ENCODE measurements at regions of chr3 and their contacts with region 1.

Region 1: DNA sequence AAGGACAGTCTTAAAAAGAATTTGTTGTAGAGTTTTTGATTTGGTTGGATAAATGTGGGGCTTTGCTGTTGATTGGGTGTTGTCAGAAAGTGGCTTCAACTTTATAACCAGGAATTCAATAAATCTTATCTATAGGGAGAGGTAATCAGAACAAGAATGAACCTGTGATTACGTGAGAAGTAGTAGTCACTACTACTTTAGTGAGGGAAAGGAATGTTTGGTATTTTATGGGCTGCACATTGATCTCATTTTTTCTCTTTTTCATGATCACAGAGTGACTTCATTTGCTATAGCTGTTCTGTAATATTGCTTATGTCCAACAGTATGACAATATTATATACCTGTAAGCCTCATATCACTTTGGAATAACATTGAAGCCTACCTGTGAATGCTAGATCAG is 485.2 kb upstream of the BCHE start:
- DNase-seq: peak; percentile 16
- H3K4me3 ChIP-seq: no peak overlapping the region
- H3K27ac ChIP-seq: no peak overlapping the region
- H3K4me1 ChIP-seq: peaks cover 3% of the 10 kb centered on the region
- H3K27me3 ChIP-seq: no peaks in the 10 kb centered on the region
- CTCF ChIP-seq: no peak

Region 2: GRCh38 chr3:166372571-166373106 is 50.2 kb after region 1 on chr3:
- CTCF ChIA-PET with region 1: no interaction called
- dilution Hi-C with region 1: loop called (anchors 5 kb)
- in situ Hi-C with region 1: no loop called
- intact Hi-C with region 1: no loop called
- DNase-seq: no peak
- H3K4me3 ChIP-seq: no peak overlapping the region
- H3K27ac ChIP-seq: no peak overlapping the region
- H3K4me1 ChIP-seq: no peaks in the 10 kb centered on the region
- H3K27me3 ChIP-seq: peaks cover 3% of the 10 kb centered on the region
- CTCF ChIP-seq: no peak

Region 3: GRCh38 chr3:166444771-166445170 is 122.4 kb after region 1 on chr3:
- CTCF ChIA-PET with region 1: no interaction called
- dilution Hi-C with region 1: no loop called
- in situ Hi-C with region 1: no loop called
- intact Hi-C with region 1: no loop called
- DNase-seq: peak; percentile 94
- H3K4me3 ChIP-seq: peak overlapping the region in 2 of 3 experiments; percentile 6 to 8
- H3K27ac ChIP-seq: peak overlapping the region; percentile 62
- H3K4me1 ChIP-seq: peaks cover 34% of the 10 kb centered on the region
- H3K27me3 ChIP-seq: no peaks in the 10 kb centered on the region
- CTCF ChIP-seq: no peak

Measured in mammary epithelial cell (primary cell).